CD8-positive, alpha-beta T cell (primary cell): ENCODE measurements at regions of chr1 and their contacts with region 1.

Region 1: DNA sequence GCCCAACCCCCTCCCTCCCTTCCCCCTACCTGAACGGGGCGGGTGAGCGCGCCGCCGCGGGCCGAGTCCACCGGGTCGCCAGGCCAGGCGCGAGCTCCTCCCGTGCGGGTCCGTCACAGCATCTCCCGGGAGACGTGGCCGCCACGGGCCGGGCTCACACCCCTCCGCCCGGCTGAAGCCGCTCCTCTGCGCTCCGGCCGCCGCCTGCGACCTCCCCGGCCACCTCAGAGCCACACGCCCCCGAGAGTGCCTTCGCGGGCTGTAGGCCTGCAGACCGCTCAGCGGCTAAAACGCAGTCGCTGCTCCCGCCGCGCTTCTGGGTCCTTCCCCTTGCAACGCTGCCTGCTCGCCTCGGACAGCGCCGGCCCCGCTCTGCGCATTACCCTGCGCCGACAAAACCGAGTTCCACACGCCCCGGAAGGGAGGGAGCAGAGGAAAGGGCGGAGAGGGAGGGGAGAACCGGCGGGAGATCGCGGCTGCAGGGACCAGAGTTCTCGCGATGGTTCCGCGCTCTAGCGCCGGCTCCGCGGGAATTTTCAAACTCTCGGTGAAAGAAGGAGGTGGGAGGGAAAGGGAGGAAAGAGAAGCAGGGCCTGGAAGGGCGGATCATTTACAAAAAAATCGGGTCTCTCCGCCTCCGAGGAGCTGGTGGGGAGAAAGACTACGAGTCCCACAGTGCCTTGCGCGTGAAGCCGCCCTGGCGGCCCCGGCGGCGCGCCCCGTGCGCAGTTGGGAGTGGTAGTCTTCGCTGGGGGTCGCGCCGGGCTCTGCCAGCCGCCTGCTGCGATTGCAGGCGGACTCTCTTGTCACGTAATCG is at the start of gene AHCTF1:
- DNase-seq: peak; percentile 88 to 97 (median 94)
- ATAC-seq: peak; percentile 89
- H3K4me3 ChIP-seq: peak within 1 kb of the TSS; percentile 84 to 90
- H3K4me3 Mint-ChIP-seq: peak within 1 kb of the TSS; percentile 96
- H3K27ac ChIP-seq: peak within 1 kb of the TSS; percentile 78 to 94
- H3K27ac Mint-ChIP-seq: peak within 1 kb of the TSS; percentile 95
- H3K4me1 ChIP-seq: peaks cover 14% of the 10 kb centered on the region
- H3K4me1 Mint-ChIP-seq: peaks cover 33% of the 10 kb centered on the region
- H3K27me3 ChIP-seq: no peaks in the 10 kb centered on the region
- H3K27me3 Mint-ChIP-seq: no peaks in the 10 kb centered on the region
- CTCF ChIP-seq: no peak
- total RNA-seq, gene AHCTF1: 68.4 to 69.3 TPM

Region 2: DNA sequence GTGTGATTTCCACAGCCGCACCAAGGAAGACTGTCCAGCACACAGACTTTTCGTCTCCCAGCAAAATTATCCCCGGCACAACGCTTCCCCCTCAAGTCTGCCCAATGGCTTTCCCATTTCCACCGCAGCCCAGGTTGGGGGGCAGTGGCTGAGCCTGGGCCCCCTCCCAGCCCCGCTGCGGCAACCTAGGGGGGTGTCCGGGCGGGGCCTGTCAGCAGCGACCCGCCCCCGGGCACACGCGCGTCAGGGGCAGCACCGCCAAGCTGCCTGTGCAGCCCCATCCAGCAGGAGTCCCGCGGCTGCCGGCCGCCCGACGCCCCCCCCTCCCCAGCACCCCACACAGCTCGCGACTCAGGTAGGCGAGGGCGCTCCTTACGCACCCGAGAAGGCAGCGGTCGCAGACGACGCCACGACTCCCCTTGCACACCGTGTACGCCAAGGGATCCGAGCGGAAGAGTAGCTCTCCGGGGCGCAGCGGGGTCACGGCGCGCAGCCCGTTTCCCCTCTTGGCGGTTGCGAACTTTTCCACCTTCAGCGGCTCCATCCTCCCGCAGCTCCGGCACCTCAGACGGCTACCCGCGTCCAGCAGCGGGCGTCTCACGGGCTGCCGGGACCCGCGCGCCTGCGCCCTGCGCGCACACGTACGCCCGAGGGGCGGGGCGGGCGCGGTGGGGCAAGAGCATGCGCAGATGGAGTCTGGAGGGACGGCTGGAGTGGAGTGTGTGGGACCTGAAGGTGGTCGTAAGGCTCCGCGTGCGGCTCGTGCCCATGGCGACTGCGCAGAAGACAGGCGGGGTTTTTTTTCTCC is 424.9 kb before region 1 on chr1 and contains the start of gene SMYD3:
- CTCF ChIA-PET with region 1: no interaction called
- POLR2A ChIA-PET with region 1: no interaction called
- intact Hi-C with region 1: loop called in 1 of 2 experiments (anchors 5 kb)
- DNase-seq: peak; percentile 56 to 92 (median 75)
- ATAC-seq: peak; percentile 88
- H3K4me3 ChIP-seq: peak within 1 kb of the TSS; percentile 77 to 92
- H3K4me3 Mint-ChIP-seq: peak within 1 kb of the TSS; percentile 88
- H3K27ac ChIP-seq: peak within 1 kb of the TSS; percentile 56 to 59
- H3K27ac Mint-ChIP-seq: peak within 1 kb of the TSS; percentile 85
- H3K4me1 ChIP-seq: peaks cover 13% of the 10 kb centered on the region
- H3K4me1 Mint-ChIP-seq: peaks cover 35% of the 10 kb centered on the region
- H3K27me3 ChIP-seq: no peaks in the 10 kb centered on the region
- H3K27me3 Mint-ChIP-seq: no peaks in the 10 kb centered on the region
- CTCF ChIP-seq: no peak
- total RNA-seq, gene SMYD3: 20.5 to 21.2 TPM

Region 3: GRCh38 chr1:246733704-246734103 is 198.1 kb before region 1 on chr1:
- CTCF ChIA-PET with region 1: no interaction called
- POLR2A ChIA-PET with region 1: no interaction called
- intact Hi-C with region 1: no loop called
- DNase-seq: no peak
- ATAC-seq: no peak
- H3K4me3 ChIP-seq: no peak overlapping the region
- H3K4me3 Mint-ChIP-seq: no peak overlapping the region
- H3K27ac ChIP-seq: no peak overlapping the region
- H3K27ac Mint-ChIP-seq: no peak overlapping the region
- H3K4me1 ChIP-seq: no peaks in the 10 kb centered on the region
- H3K4me1 Mint-ChIP-seq: no peaks in the 10 kb centered on the region
- H3K27me3 ChIP-seq: no peaks in the 10 kb centered on the region
- H3K27me3 Mint-ChIP-seq: no peaks in the 10 kb centered on the region
- CTCF ChIP-seq: no peak

Region 4: DNA sequence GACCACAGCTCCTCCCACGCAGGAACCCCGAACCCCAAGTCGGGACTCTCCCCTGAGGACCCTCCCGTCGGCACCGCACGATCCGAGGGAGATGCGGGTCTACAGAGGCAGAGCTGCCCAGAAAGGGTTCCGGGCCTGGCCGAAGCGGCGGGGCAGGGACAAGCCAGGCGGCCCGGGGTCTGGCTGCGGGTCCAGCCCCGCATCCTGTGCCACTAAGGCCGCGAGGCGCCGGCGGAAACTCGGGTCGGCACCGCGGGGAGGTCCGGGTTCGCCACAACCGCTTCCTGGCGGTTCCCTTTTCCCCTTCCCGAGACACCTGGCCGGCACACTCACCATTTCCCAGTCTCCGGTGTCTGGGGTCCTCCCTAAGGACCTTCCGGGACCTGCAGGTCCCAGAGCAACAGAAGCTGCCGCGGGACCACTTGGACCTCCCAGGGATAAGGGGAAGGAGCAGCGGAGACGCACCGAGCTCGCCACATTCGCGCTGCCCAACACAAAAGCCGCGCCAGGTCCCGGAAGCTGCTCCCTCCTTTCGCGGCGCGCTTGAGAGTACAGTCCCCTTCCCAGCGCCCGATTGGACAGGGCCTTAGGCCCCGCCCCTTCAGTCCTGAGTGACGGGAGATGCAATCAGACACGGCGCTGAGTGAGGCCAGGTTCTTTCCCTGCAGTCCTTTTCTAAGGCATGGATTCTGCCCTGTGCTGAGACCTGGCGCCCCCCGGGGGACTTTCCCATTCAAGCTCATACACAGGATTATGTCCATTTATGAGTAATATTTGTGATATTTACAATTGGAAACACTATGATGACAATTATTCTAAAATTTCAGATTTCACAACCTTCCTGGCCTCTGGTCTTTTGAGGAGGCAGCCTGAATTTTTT is 146.7 kb after region 1 on chr1 and contains the start of gene ZNF670:
- CTCF ChIA-PET with region 1: no interaction called
- POLR2A ChIA-PET with region 1: interaction called, 3 read pairs
- intact Hi-C with region 1: loop called (anchors 5 to 10 kb)
- DNase-seq: peak; percentile 57 to 91 (median 82)
- ATAC-seq: peak; percentile 99
- H3K4me3 ChIP-seq: peak within 1 kb of the TSS; percentile 80 to 95
- H3K4me3 Mint-ChIP-seq: peak within 1 kb of the TSS; percentile 89
- H3K27ac ChIP-seq: peak within 1 kb of the TSS; percentile 37 to 51
- H3K27ac Mint-ChIP-seq: peak within 1 kb of the TSS; percentile 78
- H3K4me1 ChIP-seq: peaks cover 7% of the 10 kb centered on the region
- H3K4me1 Mint-ChIP-seq: peaks cover 34% of the 10 kb centered on the region
- H3K27me3 ChIP-seq: no peaks in the 10 kb centered on the region
- H3K27me3 Mint-ChIP-seq: no peaks in the 10 kb centered on the region
- CTCF ChIP-seq: no peak
- total RNA-seq, gene ZNF670: 0.17 TPM in 1 of 2 experiments, not detected in the other

Region 5: GRCh38 chr1:247103859-247104591 is 172.3 kb after region 1 on chr1 and contains the start of gene ZNF669:
- CTCF ChIA-PET with region 1: no interaction called
- POLR2A ChIA-PET with region 1: no interaction called
- intact Hi-C with region 1: loop called (anchors 2 to 5 kb)
- DNase-seq: peak; percentile 83 to 94 (median 91)
- ATAC-seq: peak; percentile 98
- H3K4me3 ChIP-seq: peak within 1 kb of the TSS; percentile 74 to 96
- H3K4me3 Mint-ChIP-seq: peak within 1 kb of the TSS; percentile 89
- H3K27ac ChIP-seq: peak within 1 kb of the TSS; percentile 62 to 85
- H3K27ac Mint-ChIP-seq: peak within 1 kb of the TSS; percentile 85
- H3K4me1 ChIP-seq: peaks cover 9% of the 10 kb centered on the region
- H3K4me1 Mint-ChIP-seq: peaks cover 21% of the 10 kb centered on the region
- H3K27me3 ChIP-seq: no peaks in the 10 kb centered on the region
- H3K27me3 Mint-ChIP-seq: peaks cover 20% of the 10 kb centered on the region
- CTCF ChIP-seq: no peak
- total RNA-seq, gene ZNF669: 15.5 to 23.2 TPM

Region 6: DNA sequence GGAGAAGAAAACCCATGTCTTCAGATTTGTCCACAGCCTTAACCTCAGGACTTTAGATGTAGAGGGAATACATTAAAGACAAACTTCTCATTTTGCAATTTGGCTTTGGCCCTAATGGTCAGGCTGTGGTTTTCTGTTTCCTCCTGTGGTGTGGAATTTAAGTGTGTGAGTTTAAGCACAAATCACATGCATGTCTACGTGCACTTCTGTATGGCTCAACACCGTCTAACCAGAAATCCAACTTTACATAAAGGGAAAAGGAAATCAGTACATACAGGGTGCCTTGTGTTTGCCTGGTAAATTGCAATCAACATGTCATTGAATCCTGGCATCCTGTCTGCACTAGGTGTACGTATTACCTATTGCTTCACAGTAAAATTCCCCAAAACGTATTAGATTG is 241.2 kb after region 1 on chr1:
- CTCF ChIA-PET with region 1: no interaction called
- POLR2A ChIA-PET with region 1: no interaction called
- intact Hi-C with region 1: loop called in 1 of 2 experiments (anchors 2 kb)
- DNase-seq: peak in 1 of 9 experiments; percentile 11
- ATAC-seq: no peak
- H3K4me3 ChIP-seq: no peak overlapping the region
- H3K4me3 Mint-ChIP-seq: no peak overlapping the region
- H3K27ac ChIP-seq: no peak overlapping the region
- H3K27ac Mint-ChIP-seq: no peak overlapping the region
- H3K4me1 ChIP-seq: no peaks in the 10 kb centered on the region
- H3K4me1 Mint-ChIP-seq: peaks cover 19% of the 10 kb centered on the region
- H3K27me3 ChIP-seq: no peaks in the 10 kb centered on the region
- H3K27me3 Mint-ChIP-seq: no peaks in the 10 kb centered on the region
- CTCF ChIP-seq: no peak